CD4-positive, alpha-beta T cell (primary cell): ENCODE measurements at regions of chr14 and their contacts with region 1.

Region 1: GRCh38 chr14:21437063-21437901 is 18.6 kb downstream of the CHD8 start:
- DNase-seq: peak; percentile 97 to 100 (median 99)
- ATAC-seq: peak; percentile 98
- H3K4me3 ChIP-seq: peak overlapping the region; percentile 84
- H3K4me3 Mint-ChIP-seq: peak overlapping the region; percentile 98
- H3K27ac ChIP-seq: peak overlapping the region; percentile 78 to 81
- H3K27ac Mint-ChIP-seq: peak overlapping the region; percentile 96
- H3K4me1 ChIP-seq: peaks cover 14% of the 10 kb centered on the region
- H3K4me1 Mint-ChIP-seq: peaks cover 81% of the 10 kb centered on the region
- H3K27me3 ChIP-seq: no peaks in the 10 kb centered on the region
- H3K27me3 Mint-ChIP-seq: no peaks in the 10 kb centered on the region
- CTCF ChIP-seq: no peak

Region 2: DNA sequence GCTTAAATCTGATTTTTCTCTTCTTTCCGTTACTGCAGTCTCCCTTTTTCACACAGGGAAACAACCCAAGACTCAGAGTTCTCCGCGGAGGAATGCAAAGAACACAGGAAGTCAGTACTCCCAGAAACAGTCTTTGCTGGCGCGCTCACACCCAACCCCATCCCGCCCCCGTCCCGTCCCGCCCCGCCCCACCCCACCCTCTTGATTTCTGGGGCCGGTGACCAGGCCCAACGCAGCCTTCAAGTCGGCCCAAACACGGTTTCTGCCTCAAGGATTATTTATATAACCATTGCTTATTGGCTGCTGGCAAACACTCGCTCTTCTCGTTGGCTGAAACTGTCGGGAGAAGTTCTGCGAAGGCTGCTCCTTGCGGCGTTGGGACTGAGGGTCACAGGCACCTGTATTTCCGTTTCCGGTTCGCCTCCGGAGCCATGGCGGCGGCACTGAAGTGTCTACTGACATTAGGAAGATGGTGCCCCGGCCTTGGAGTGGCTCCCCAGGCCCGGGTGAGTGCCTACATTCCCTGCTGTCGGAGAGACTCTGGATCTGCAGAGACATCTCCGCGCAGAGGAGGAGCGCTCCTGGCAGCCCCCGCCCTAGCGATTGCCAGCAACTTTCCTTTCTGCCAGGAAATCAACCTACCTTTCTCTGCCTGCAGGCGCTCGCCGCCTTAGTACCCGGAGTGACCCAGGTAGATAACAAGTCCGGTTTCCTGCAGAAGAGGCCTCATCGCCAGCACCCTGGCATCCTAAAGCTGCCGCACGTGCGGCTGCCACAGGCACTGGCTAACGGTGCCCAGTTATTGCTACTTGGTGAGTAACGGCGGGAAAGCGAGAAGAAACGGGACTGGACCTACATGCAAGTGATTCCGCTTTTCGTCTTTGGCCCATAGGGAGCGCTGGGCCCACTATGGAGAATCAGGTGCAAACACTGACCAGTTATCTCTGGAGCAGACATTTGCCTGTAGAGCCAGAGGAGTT is 447.4 kb before region 1 on chr14 and contains the start of gene METTL17:
- CTCF ChIA-PET with region 1: no interaction called
- POLR2A ChIA-PET with region 1: no interaction called
- intact Hi-C with region 1: no loop called
- DNase-seq: peak; percentile 72 to 95 (median 80)
- ATAC-seq: peak; percentile 92
- H3K4me3 ChIP-seq: peak within 1 kb of the TSS; percentile 95
- H3K4me3 Mint-ChIP-seq: peak within 1 kb of the TSS; percentile 90
- H3K27ac ChIP-seq: peak within 1 kb of the TSS; percentile 59 to 73
- H3K27ac Mint-ChIP-seq: peak within 1 kb of the TSS; percentile 92
- H3K4me1 ChIP-seq: peaks cover 24% of the 10 kb centered on the region
- H3K4me1 Mint-ChIP-seq: peaks cover 36% of the 10 kb centered on the region
- H3K27me3 ChIP-seq: no peaks in the 10 kb centered on the region
- H3K27me3 Mint-ChIP-seq: no peaks in the 10 kb centered on the region
- CTCF ChIP-seq: no peak
- total RNA-seq, gene METTL17: 92.0 to 94.8 TPM

Region 3: DNA sequence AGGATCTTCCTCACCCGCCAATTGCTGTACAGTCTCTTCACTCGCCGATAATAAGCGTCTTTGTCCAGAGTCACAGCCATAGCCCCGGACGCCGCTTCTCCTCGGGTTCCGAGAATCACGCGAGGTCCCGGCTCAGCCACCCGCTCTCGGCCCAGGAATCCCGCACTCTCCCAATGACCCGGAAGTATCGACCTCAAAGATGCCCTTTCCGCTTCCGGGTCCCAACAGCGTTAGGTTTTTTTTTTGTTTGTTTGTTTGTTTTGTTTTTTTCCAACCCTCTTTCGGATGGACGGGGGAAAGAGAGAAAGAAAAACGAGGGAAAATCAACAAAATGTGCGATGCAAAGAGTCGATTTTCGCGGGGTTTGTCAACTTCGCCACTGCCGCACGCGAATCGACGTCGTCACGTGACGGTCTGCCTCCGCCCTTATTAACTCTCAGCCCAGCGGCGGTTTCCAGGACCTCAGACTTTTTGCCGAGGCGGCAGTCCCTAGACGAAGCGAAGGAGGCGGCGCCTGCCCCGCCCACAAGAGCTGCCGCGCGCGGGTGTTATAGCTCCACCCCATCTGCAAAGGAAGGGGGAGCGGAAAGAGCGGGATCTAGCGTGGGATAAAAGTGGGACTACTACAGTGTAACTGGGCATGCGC is 53.3 kb before region 1 on chr14 and contains the start of gene SUPT16H:
- CTCF ChIA-PET with region 1: interaction called, 3 read pairs
- POLR2A ChIA-PET with region 1: interaction called, 18 read pairs
- intact Hi-C with region 1: loop called in 1 of 2 experiments (anchors 2 kb)
- DNase-seq: peak; percentile 84 to 97 (median 91)
- ATAC-seq: peak; percentile 91
- H3K4me3 ChIP-seq: peak within 1 kb of the TSS; percentile 82
- H3K4me3 Mint-ChIP-seq: peak within 1 kb of the TSS; percentile 98
- H3K27ac ChIP-seq: peak within 1 kb of the TSS; percentile 83 to 92
- H3K27ac Mint-ChIP-seq: peak within 1 kb of the TSS; percentile 99
- H3K4me1 ChIP-seq: peaks cover 18% of the 10 kb centered on the region
- H3K4me1 Mint-ChIP-seq: peaks cover 47% of the 10 kb centered on the region
- H3K27me3 ChIP-seq: no peaks in the 10 kb centered on the region
- H3K27me3 Mint-ChIP-seq: no peaks in the 10 kb centered on the region
- CTCF ChIP-seq: no peak
- total RNA-seq, gene SUPT16H: 47.8 to 50.8 TPM

Region 4: DNA sequence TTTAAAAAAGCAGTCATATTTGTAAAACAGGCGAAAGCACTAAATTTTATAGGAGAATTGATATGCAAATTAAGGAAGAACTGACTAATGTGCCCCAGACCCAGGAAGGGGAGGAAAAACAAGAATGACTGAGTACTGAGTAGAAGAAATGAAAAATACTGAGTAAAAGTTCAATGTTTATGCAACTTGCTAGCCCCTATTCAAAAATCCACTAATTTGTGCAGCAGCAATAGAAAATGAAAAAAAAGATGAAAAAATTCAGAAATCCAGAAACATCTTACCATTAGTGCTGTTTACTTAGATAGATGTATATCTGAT is 12.6 kb after region 1 on chr14:
- CTCF ChIA-PET with region 1: no interaction called
- POLR2A ChIA-PET with region 1: interaction called, 247 read pairs
- intact Hi-C with region 1: loop called in 1 of 2 experiments (anchors 1 kb)
- DNase-seq: no peak
- ATAC-seq: no peak
- H3K4me3 ChIP-seq: no peak overlapping the region
- H3K4me3 Mint-ChIP-seq: no peak overlapping the region
- H3K27ac ChIP-seq: no peak overlapping the region
- H3K27ac Mint-ChIP-seq: no peak overlapping the region
- H3K4me1 ChIP-seq: peaks cover 39% of the 10 kb centered on the region
- H3K4me1 Mint-ChIP-seq: peaks cover 69% of the 10 kb centered on the region
- H3K27me3 ChIP-seq: no peaks in the 10 kb centered on the region
- H3K27me3 Mint-ChIP-seq: no peaks in the 10 kb centered on the region
- CTCF ChIP-seq: no peak

Region 5: GRCh38 chr14:21510735-21511657 is 73.7 kb after region 1 on chr14 and contains the start of gene METTL3:
- CTCF ChIA-PET with region 1: no interaction called
- POLR2A ChIA-PET with region 1: interaction called, 16 read pairs
- intact Hi-C with region 1: loop called in 1 of 2 experiments (anchors 2 kb)
- DNase-seq: peak; percentile 88 to 98 (median 90)
- ATAC-seq: peak; percentile 99
- H3K4me3 ChIP-seq: peak within 1 kb of the TSS; percentile 83
- H3K4me3 Mint-ChIP-seq: peak within 1 kb of the TSS; percentile 98
- H3K27ac ChIP-seq: peak within 1 kb of the TSS; percentile 82 to 84
- H3K27ac Mint-ChIP-seq: peak within 1 kb of the TSS; percentile 98
- H3K4me1 ChIP-seq: peaks cover 30% of the 10 kb centered on the region
- H3K4me1 Mint-ChIP-seq: peaks cover 45% of the 10 kb centered on the region
- H3K27me3 ChIP-seq: no peaks in the 10 kb centered on the region
- H3K27me3 Mint-ChIP-seq: no peaks in the 10 kb centered on the region
- CTCF ChIP-seq: no peak
- total RNA-seq, gene METTL3: 31.9 to 34.5 TPM

Region 6: GRCh38 chr14:21557084-21557901 is 120.0 kb after region 1 on chr14:
- CTCF ChIA-PET with region 1: no interaction called
- POLR2A ChIA-PET with region 1: interaction called, 5 read pairs
- intact Hi-C with region 1: loop called in 1 of 2 experiments (anchors 1 kb)
- DNase-seq: peak; percentile 40 to 91 (median 70)
- ATAC-seq: peak; percentile 70
- H3K4me3 ChIP-seq: peak overlapping the region; percentile 36
- H3K4me3 Mint-ChIP-seq: no peak overlapping the region
- H3K27ac ChIP-seq: no peak overlapping the region
- H3K27ac Mint-ChIP-seq: no peak overlapping the region
- H3K4me1 ChIP-seq: peaks cover 4% of the 10 kb centered on the region
- H3K4me1 Mint-ChIP-seq: peaks cover 6% of the 10 kb centered on the region
- H3K27me3 ChIP-seq: no peaks in the 10 kb centered on the region
- H3K27me3 Mint-ChIP-seq: no peaks in the 10 kb centered on the region
- CTCF ChIP-seq: peak; percentile 80